IMR-90 (cell line): ENCODE measurements at regions of chr11 and their contacts with region 1.

Region 1: DNA sequence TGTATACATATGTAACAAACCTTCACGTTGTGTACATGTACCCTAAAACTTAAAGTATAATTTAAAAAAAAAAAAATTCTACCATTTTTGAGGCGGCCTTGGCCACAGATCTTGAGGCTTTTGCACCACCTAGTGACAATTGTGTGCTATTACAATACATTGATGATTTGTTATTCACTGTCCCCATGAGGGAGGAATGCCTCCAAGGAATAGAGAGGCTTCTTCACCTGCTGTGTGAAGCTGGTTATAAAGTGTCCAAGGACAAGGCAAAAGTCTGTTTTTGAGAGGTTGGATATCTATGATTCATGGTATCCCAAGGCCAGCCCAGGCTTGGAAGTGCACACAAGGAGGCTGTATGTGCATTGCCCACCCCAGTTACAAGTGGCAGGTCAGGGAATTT is 30.7 kb downstream of the SLC22A25 start:
- DNase-seq: no peak
- ATAC-seq: peak; percentile 77
- H3K4me3 ChIP-seq: no peak overlapping the region
- H3K27ac ChIP-seq: no peak overlapping the region
- H3K4me1 ChIP-seq: no peaks in the 10 kb centered on the region
- H3K27me3 ChIP-seq: 0 out of 2 replicates have a peak, but pooled peaks cover 1% of the 10 kb centered on the region
- CTCF ChIP-seq: peak; percentile 57
- POLR2A ChIP-seq: no peak
- RAD21 ChIP-seq: peak; percentile 55

Region 2: GRCh38 chr11:62556108-62556871 is 656.5 kb before region 1 on chr11:
- CTCF ChIA-PET with region 1: no interaction called
- POLR2A ChIA-PET with region 1: no interaction called
- dilution Hi-C with region 1: no loop called
- in situ Hi-C with region 1: no loop called
- intact Hi-C with region 1: no loop called
- DNase-seq: peak; percentile 95
- ATAC-seq: peak; percentile 57
- H3K4me3 ChIP-seq: peak overlapping the region; percentile 3; the same call in 1 of the 2 replicates
- H3K27ac ChIP-seq: peak overlapping the region; percentile 78
- H3K4me1 ChIP-seq: peaks cover 40% of the 10 kb centered on the region
- H3K27me3 ChIP-seq: no peaks in the 10 kb centered on the region
- CTCF ChIP-seq: no peak
- POLR2A ChIP-seq: no peak
- RAD21 ChIP-seq: no peak; the same call in 1 of the 2 replicates

Region 3: GRCh38 chr11:63032457-63032856 is 180.3 kb before region 1 on chr11:
- CTCF ChIA-PET with region 1: no interaction called
- POLR2A ChIA-PET with region 1: no interaction called
- dilution Hi-C with region 1: no loop called
- in situ Hi-C with region 1: loop called (anchors 10 kb)
- intact Hi-C with region 1: loop called (anchors 1 kb)
- DNase-seq: no peak
- ATAC-seq: no peak
- H3K4me3 ChIP-seq: no peak overlapping the region
- H3K27ac ChIP-seq: no peak overlapping the region
- H3K4me1 ChIP-seq: no peaks in the 10 kb centered on the region
- H3K27me3 ChIP-seq: peaks cover 4% of the 10 kb centered on the region
- CTCF ChIP-seq: no peak
- POLR2A ChIP-seq: no peak
- RAD21 ChIP-seq: no peak